Activated naive CD4-positive, alpha-beta T cell treated with anti-CD3 and anti-CD28 coated beads for 36 hours (primary cell): ENCODE measurements at regions of chr11 and their contacts with region 1.

Region 1: DNA sequence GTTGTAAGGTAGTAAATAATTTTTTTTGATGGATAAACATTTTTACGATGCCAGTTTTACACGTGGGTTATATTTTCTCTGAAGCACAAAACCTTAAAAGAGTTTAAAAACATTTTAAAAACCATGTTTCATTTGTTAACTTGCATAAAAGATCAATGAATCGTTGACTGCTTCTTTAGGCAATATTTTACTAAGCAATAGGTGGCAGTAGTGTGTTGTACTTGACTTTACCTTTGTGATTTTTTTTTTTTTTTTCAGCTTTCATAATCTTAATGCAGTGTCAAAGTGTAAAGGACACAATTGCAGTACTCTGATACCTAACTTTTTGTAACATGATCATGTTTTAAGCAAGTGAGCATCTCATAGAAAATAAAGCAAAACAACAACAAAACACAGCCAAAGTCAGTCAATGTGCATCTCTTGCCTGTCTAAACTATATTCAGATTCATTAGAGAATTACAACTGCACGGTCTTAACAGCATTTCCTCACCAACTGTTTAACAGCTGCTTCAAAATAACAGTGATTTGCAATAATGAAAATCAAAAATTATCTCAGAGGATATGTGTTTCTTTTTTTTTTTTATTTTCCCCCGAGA is 27.7 kb downstream of the DNAJC24 start:
- DNase-seq: no peak
- H3K4me3 Mint-ChIP-seq: no peak overlapping the region
- H3K27ac Mint-ChIP-seq: no peak overlapping the region
- H3K4me1 Mint-ChIP-seq: no peaks in the 10 kb centered on the region
- H3K27me3 Mint-ChIP-seq: no peaks in the 10 kb centered on the region

Region 2: GRCh38 chr11:31870609-31871309 is 473.4 kb after region 1 on chr11:
- CTCF ChIA-PET with region 1: interaction called, 4 read pairs
- intact Hi-C with region 1: loop called (anchors 1 kb)
- DNase-seq: peak; percentile 51
- H3K4me3 Mint-ChIP-seq: no peak overlapping the region
- H3K27ac Mint-ChIP-seq: no peak overlapping the region
- H3K4me1 Mint-ChIP-seq: no peaks in the 10 kb centered on the region
- H3K27me3 Mint-ChIP-seq: peaks cover 30% of the 10 kb centered on the region

Region 3: DNA sequence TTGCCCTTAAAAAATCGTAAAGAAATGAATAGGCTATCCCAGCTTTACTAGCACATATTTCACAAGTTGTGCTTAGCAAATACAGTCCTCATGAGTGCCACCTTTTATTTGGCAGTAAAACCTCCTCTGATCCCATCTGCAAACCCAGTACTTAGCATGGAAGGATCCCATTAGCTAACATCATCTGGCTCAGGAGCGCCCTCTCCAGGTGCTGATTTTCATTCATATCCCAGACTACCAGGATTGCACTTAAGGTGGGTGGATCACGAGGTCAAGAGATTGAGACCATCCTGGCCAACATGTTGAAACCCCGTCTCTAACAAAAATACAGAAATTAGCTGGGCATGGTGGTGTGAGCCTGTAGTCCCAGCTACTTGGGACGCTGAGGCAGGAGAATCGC is 489.8 kb after region 1 on chr11:
- CTCF ChIA-PET with region 1: no interaction called
- intact Hi-C with region 1: loop called (anchors 1 kb)
- DNase-seq: peak; percentile 38
- H3K4me3 Mint-ChIP-seq: no peak overlapping the region
- H3K27ac Mint-ChIP-seq: no peak overlapping the region
- H3K4me1 Mint-ChIP-seq: no peaks in the 10 kb centered on the region
- H3K27me3 Mint-ChIP-seq: no peaks in the 10 kb centered on the region

Region 4: GRCh38 chr11:32006799-32007388 is 609.6 kb after region 1 on chr11:
- CTCF ChIA-PET with region 1: no interaction called
- intact Hi-C with region 1: loop called (anchors 5 kb)
- DNase-seq: peak; percentile 31
- H3K4me3 Mint-ChIP-seq: no peak overlapping the region
- H3K27ac Mint-ChIP-seq: no peak overlapping the region
- H3K4me1 Mint-ChIP-seq: no peaks in the 10 kb centered on the region
- H3K27me3 Mint-ChIP-seq: peaks cover 20% of the 10 kb centered on the region

Region 5: DNA sequence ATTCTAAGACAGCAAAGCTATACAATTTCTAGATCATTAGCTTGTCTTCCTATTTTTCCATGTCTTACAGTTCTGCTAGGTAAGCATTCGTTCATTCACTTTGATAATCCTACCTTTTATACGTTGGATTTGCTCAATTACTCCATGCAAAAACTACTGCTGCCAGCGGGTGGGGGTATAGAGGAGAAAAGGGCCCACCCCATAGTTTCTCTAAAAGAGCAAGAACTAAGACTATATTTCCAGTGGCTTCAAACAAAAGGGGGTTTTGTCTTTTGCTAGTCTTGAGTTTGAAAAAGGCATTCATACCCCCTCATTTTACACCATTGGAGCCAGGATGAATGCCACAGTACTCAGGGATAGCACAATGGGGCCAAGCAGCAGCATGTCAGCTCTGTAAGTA is 882.3 kb after region 1 on chr11:
- CTCF ChIA-PET with region 1: no interaction called
- intact Hi-C with region 1: no loop called
- DNase-seq: no peak
- H3K4me3 Mint-ChIP-seq: no peak overlapping the region
- H3K27ac Mint-ChIP-seq: no peak overlapping the region
- H3K4me1 Mint-ChIP-seq: no peaks in the 10 kb centered on the region
- H3K27me3 Mint-ChIP-seq: peaks cover 14% of the 10 kb centered on the region